Mammary epithelial cell (primary cell): ENCODE measurements at regions of chr1 and their contacts with region 1.

Region 1: DNA sequence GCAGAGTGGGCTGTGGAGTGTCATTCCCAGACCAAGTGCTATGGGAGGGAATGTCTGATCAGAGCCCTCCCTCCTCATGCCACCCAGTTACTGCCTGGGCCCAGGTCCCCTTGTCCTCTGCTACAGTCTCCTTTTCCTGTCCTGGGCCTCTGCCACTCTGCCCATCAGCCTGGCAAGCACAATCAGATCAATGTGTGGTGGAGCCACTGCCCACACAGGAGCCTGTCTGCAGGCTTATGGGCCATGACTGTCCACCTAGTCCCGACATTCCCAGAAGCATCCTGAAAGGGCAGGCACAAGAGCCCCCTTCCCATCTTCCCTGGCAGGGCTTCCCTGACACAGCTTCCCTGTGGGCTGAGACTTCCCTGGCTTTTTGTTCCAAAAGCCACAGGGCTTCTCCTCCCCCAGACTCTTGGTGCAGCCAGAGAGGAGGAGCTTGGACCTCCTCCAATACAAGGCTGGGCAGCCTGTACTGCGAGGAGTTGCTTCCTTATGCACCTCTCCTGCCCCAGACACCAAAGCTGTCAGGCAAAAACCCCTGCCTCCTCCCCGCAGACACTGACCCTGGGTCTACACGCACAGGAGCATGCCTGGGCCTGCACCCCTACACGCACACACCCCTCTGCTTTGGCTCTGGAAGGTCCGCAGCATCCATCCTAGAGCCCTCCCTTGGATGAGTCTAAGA is 29.2 kb upstream of the CNTN2 start:
- DNase-seq: peak; percentile 23
- H3K4me3 ChIP-seq: no peak overlapping the region
- H3K27ac ChIP-seq: no peak overlapping the region
- H3K4me1 ChIP-seq: peaks cover 7% of the 10 kb centered on the region
- H3K27me3 ChIP-seq: no peaks in the 10 kb centered on the region
- CTCF ChIP-seq: no peak

Region 2: GRCh38 chr1:204941421-204942338 is 72.1 kb before region 1 on chr1:
- CTCF ChIA-PET with region 1: no interaction called
- dilution Hi-C with region 1: no loop called
- in situ Hi-C with region 1: no loop called
- intact Hi-C with region 1: no loop called
- DNase-seq: peak; percentile 37
- H3K4me3 ChIP-seq: no peak overlapping the region
- H3K27ac ChIP-seq: no peak overlapping the region
- H3K4me1 ChIP-seq: peaks cover 14% of the 10 kb centered on the region
- H3K27me3 ChIP-seq: no peaks in the 10 kb centered on the region
- CTCF ChIP-seq: peak; percentile 98

Region 3: DNA sequence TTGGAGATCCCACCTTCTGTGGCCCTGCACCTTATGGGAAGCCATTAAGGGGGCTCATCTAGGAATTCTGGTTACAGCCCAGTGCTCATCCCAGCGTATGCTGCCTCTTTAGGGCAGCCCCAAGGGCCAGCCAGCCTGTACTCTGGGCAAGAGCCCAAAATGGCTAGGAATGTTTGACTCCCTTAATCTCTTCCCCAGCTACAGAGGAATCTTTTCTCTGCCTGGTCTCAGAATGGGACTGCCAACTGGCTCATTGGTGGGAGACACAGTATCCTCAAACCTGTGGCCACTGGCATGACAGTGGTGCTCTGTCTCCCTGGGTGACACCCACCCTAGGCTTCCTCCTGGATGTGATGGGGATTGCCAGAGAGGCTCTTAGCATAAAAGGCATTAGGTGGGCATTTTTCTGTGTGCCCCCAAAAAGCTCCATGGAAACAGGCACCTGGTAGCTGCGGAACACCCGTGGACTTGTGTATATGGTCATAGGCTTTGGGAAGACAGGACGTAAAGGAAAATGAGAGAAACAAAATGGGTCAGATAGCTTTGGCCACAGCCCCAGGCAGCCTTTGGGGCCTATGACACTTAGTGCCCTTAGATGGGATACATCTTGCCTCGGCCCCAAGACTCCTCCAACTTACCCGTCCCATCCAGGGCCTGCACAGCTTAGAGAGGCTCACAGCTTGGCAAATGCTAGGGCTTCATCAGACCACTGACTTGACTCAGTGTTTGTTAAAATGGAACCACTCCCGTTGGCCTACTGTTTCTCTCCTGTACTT is 63.5 kb after region 1 on chr1:
- CTCF ChIA-PET with region 1: no interaction called
- dilution Hi-C with region 1: loop called (anchors 10 kb)
- in situ Hi-C with region 1: no loop called
- intact Hi-C with region 1: no loop called
- DNase-seq: no peak
- H3K4me3 ChIP-seq: no peak overlapping the region
- H3K27ac ChIP-seq: no peak overlapping the region
- H3K4me1 ChIP-seq: peaks cover 20% of the 10 kb centered on the region
- H3K27me3 ChIP-seq: no peaks in the 10 kb centered on the region
- CTCF ChIP-seq: no peak